ENCODE measurements at regions of chr7 and their contacts with region 1.

Region 1: DNA sequence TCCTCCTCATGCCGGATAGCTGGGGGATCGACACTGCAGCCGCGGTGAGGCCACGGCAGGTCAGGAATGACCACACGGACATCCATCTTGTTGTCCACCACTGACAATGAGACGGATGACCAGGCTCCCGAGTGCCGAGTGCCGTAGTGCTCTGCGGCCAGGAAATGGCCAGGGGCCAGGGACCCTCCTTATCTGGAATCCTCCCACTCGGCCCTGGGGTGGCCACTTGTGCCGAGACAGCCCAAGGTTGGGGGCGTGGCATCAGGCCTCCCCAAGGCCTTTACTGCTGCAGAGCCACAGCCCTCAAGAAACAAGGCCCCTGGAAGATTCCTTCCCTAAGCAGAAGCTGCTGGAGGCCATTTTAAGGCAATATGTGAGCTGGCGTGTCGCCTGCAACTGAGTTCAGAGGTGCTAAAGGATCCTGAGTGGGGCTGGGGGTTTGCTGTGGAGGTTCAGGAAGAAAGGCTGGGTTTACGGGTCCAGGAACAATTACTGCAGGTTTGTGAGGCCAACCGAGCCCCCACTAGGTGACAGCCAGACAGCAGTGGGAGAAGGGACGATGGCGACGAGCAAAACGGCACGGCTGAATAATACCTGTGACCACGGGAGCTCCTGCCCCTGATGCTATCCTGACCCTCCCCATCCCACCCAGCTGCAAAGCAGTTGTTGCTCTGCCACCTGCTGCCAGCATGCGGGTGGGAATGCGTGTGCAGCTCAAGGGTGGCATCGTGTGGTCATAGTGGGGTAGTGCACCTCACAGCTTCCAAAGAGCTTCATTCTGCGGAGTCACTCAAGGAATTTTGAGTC is 31.6 kb upstream of the LEP start:
- DNase-seq: peak; percentile 84

Region 2: GRCh38 chr7:127383123-127383835 is 826.2 kb before region 1 on chr7:
- in situ Hi-C with region 1: no loop called
- DNase-seq: peak; percentile 25

Region 3: DNA sequence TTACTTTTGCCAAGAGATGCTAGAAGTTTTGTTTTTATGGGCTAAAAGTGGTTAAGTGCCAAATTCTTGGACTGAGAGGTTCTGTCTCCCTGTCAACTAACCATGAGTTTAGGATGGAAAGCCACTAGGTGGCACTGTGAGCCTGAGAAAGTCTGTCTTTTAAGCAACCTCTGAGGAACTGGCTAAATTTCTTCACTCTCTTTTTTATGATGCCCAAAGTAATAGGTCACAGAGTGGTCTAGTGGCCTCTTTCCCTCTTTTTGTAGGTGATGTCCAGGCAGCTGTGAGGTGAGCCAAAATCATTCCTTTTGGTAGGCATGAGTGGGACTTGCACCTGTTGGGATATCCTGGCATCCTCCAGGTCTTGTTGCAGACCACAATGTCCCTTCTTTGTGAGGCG is 500.6 kb before region 1 on chr7:
- in situ Hi-C with region 1: loop called (anchors 25 kb)
- DNase-seq: peak; percentile 70

Measured in KBM-7 (cell line).